ENCODE measurements at regions of chr2 and their contacts with region 1.

Region 1: DNA sequence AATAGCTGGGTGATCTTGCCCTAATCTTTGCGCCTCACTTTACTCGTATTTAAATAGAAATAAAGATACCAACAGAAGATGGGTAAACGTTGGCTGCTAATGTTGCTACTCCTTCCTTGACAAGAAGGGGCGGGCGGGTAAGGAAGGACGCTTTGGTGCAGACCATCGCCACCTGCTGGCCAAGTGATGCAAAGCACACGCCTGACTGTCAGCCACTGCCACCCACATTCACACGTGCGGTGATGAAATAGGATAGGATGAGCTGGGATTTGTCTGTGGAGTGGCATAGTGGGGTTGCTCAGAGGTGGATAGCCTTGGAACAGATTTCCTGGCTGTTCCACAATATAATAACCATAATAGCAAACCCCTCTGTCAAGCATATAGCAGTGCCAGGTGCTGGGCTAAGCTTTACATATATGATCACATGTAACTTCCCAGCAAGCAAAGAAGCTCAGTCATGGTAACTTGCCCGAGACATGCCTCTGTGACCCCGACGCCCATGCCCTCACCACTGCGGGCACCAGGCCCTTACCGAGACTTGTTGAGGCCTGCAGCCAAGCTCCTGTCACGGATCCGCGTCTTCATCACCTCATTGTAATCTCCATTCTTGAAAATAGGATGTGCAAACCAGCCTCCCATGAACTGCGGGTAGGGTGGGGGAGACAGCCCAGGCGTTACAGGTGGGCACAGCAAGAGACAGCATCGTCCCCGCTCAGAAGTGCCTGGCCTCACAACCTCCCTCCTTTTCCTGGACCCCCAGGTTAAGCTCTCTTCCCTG is 39.3 kb downstream of the LCT start:
- DNase-seq: peak; percentile 54 to 85 (median 79)
- ATAC-seq: peak; percentile 95
- H3K4me3 ChIP-seq: no peak overlapping the region
- H3K4me3 Mint-ChIP-seq: no peak overlapping the region
- H3K27ac ChIP-seq: no peak overlapping the region
- H3K27ac Mint-ChIP-seq: no peak overlapping the region
- H3K4me1 ChIP-seq: peaks cover 2% of the 10 kb centered on the region
- H3K4me1 Mint-ChIP-seq: peaks cover 13% of the 10 kb centered on the region
- H3K27me3 ChIP-seq: no peaks in the 10 kb centered on the region
- H3K27me3 Mint-ChIP-seq: no peaks in the 10 kb centered on the region
- CTCF ChIP-seq: peak; percentile 92

Region 2: GRCh38 chr2:134988994-134989605 is 808.6 kb before region 1 on chr2:
- CTCF ChIA-PET with region 1: interaction called, 21 read pairs
- POLR2A ChIA-PET with region 1: no interaction called
- intact Hi-C with region 1: loop called (anchors 1 kb)
- DNase-seq: peak in 2 of 9 experiments; percentile 33 to 49
- ATAC-seq: peak; percentile 40
- H3K4me3 ChIP-seq: no peak overlapping the region
- H3K4me3 Mint-ChIP-seq: no peak overlapping the region
- H3K27ac ChIP-seq: no peak overlapping the region
- H3K27ac Mint-ChIP-seq: no peak overlapping the region
- H3K4me1 ChIP-seq: no peaks in the 10 kb centered on the region
- H3K4me1 Mint-ChIP-seq: peaks cover 3% of the 10 kb centered on the region
- H3K27me3 ChIP-seq: peaks cover 0 to 2% of the 10 kb centered on the region in 2 experiments
- H3K27me3 Mint-ChIP-seq: peaks cover 7% of the 10 kb centered on the region
- CTCF ChIP-seq: peak; percentile 40

Region 3: DNA sequence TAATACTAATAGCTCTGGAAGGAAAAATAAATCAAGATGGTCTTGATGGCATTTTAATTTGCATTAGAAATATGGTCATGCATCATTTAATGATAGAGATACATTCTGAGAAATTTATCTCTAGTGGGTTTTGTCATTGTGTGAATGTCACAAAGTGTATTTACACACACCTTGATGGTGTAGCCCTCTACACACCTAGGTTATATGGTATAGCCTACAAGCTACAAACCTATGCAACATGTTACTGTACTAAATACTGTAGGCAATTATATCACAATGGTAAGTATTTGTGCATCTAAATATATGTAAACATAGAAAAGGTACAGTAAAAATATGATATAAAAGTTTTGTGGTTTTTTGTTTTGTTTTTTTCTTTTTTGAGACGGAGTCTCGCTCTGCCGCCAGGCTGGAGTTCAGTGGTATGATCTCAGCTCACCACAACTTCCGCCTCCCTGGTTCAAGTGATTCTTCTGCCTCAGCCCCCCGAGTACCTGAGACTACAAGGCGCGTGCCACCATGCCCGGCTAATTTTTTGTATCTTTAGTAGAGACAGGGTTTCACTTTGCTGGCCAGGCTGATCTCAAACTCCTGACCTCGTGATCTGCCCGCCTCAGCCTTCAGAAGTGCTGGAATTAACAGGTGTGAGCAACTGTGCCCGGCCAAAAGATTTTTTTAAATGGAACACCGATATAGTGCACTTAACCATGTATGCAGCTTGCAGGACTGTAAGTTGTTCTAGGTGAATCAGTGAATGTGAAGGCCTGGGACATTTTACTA is 139.7 kb before region 1 on chr2:
- CTCF ChIA-PET with region 1: no interaction called
- POLR2A ChIA-PET with region 1: no interaction called
- intact Hi-C with region 1: no loop called
- DNase-seq: peak; percentile 35 to 86 (median 73)
- ATAC-seq: peak; percentile 92
- H3K4me3 ChIP-seq: peak overlapping the region; percentile 21 to 52
- H3K4me3 Mint-ChIP-seq: peak overlapping the region; percentile 85
- H3K27ac ChIP-seq: peak overlapping the region; percentile 41 to 80
- H3K27ac Mint-ChIP-seq: peak overlapping the region; percentile 99
- H3K4me1 ChIP-seq: peaks cover 16% of the 10 kb centered on the region
- H3K4me1 Mint-ChIP-seq: peaks cover 19% of the 10 kb centered on the region
- H3K27me3 ChIP-seq: no peaks in the 10 kb centered on the region
- H3K27me3 Mint-ChIP-seq: no peaks in the 10 kb centered on the region
- CTCF ChIP-seq: no peak

Region 4: GRCh38 chr2:135773917-135774316 is 23.8 kb before region 1 on chr2:
- CTCF ChIA-PET with region 1: interaction called, 11 read pairs
- POLR2A ChIA-PET with region 1: no interaction called
- intact Hi-C with region 1: no loop called
- DNase-seq: no peak
- ATAC-seq: no peak
- H3K4me3 ChIP-seq: no peak overlapping the region
- H3K4me3 Mint-ChIP-seq: no peak overlapping the region
- H3K27ac ChIP-seq: no peak overlapping the region
- H3K27ac Mint-ChIP-seq: no peak overlapping the region
- H3K4me1 ChIP-seq: no peaks in the 10 kb centered on the region
- H3K4me1 Mint-ChIP-seq: no peaks in the 10 kb centered on the region
- H3K27me3 ChIP-seq: no peaks in the 10 kb centered on the region
- H3K27me3 Mint-ChIP-seq: no peaks in the 10 kb centered on the region
- CTCF ChIP-seq: no peak

Region 5: DNA sequence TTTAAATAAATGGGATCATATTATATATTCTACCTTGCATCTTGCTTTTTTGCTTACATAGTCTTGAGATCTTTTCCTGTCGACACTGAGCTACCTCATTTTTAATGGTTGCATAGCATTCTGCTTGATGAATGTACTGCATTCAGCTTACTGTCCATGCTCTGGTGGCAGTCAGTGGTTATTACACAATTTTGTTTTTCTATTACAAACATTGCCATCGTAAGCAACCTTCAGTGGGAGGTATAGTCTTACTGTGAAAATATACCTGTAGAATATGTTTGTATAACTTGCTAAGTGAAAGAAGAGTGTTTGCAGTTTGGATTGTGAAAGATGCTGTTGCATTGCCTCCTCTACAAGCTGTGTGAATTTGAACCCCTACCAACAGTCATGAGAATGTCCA is 12.7 kb before region 1 on chr2:
- CTCF ChIA-PET with region 1: interaction called, 55 read pairs
- POLR2A ChIA-PET with region 1: no interaction called
- intact Hi-C with region 1: no loop called
- DNase-seq: no peak
- ATAC-seq: no peak
- H3K4me3 ChIP-seq: no peak overlapping the region
- H3K4me3 Mint-ChIP-seq: no peak overlapping the region
- H3K27ac ChIP-seq: no peak overlapping the region
- H3K27ac Mint-ChIP-seq: peak overlapping the region; percentile 8
- H3K4me1 ChIP-seq: no peaks in the 10 kb centered on the region
- H3K4me1 Mint-ChIP-seq: no peaks in the 10 kb centered on the region
- H3K27me3 ChIP-seq: no peaks in the 10 kb centered on the region
- H3K27me3 Mint-ChIP-seq: no peaks in the 10 kb centered on the region
- CTCF ChIP-seq: peak; percentile 12

Region 6: GRCh38 chr2:135815269-135815668 is 17.6 kb after region 1 on chr2:
- CTCF ChIA-PET with region 1: interaction called, 10 read pairs
- POLR2A ChIA-PET with region 1: no interaction called
- intact Hi-C with region 1: no loop called
- DNase-seq: no peak
- ATAC-seq: no peak
- H3K4me3 ChIP-seq: no peak overlapping the region
- H3K4me3 Mint-ChIP-seq: no peak overlapping the region
- H3K27ac ChIP-seq: no peak overlapping the region
- H3K27ac Mint-ChIP-seq: no peak overlapping the region
- H3K4me1 ChIP-seq: peaks cover 9% of the 10 kb centered on the region
- H3K4me1 Mint-ChIP-seq: peaks cover 19% of the 10 kb centered on the region
- H3K27me3 ChIP-seq: no peaks in the 10 kb centered on the region
- H3K27me3 Mint-ChIP-seq: no peaks in the 10 kb centered on the region
- CTCF ChIP-seq: no peak

Region 7: GRCh38 chr2:135829378-135830135 is 31.9 kb after region 1 on chr2:
- CTCF ChIA-PET with region 1: interaction called, 18 read pairs
- POLR2A ChIA-PET with region 1: no interaction called
- intact Hi-C with region 1: no loop called
- DNase-seq: no peak
- ATAC-seq: no peak
- H3K4me3 ChIP-seq: no peak overlapping the region
- H3K4me3 Mint-ChIP-seq: no peak overlapping the region
- H3K27ac ChIP-seq: no peak overlapping the region
- H3K27ac Mint-ChIP-seq: no peak overlapping the region
- H3K4me1 ChIP-seq: peaks cover 4% of the 10 kb centered on the region
- H3K4me1 Mint-ChIP-seq: peaks cover 3% of the 10 kb centered on the region
- H3K27me3 ChIP-seq: no peaks in the 10 kb centered on the region
- H3K27me3 Mint-ChIP-seq: no peaks in the 10 kb centered on the region
- CTCF ChIP-seq: no peak